ENCODE measurements at regions of chr3 and their contacts with region 1.

Region 1: DNA sequence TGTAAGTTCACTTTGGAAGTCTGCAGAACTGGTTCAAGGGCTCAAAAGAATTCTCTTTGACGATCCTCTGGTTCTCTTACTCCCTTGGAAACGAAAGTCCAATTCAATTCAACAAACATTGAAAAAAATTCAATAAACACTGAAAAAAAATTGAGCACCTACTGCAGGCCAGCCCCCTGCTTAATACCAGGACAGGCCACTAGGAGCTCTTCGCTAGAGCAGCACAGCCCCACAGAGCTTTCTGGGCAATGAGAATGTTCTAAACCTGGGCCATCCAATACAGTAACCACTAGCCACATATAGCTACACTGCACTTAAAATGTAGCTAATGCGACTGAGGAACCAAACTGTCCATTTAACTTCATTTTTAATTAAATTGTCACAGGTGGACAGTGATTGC is 50.4 kb upstream of the DCLK3 start:
- DNase-seq: no peak
- ATAC-seq: peak; percentile 86
- H3K4me3 Mint-ChIP-seq: no peak overlapping the region
- H3K27ac Mint-ChIP-seq: no peak overlapping the region
- H3K4me1 Mint-ChIP-seq: peaks cover 5% of the 10 kb centered on the region; the same call in 1 of the 2 replicates
- H3K27me3 Mint-ChIP-seq: no peaks in the 10 kb centered on the region
- CTCF ChIP-seq: 0 out of 2 replicates have a peak, but pooled peaks have one; percentile 31

Region 2: GRCh38 chr3:36804295-36805055 is 10.3 kb before region 1 on chr3:
- CTCF ChIA-PET with region 1: interaction called, 11 read pairs
- POLR2A ChIA-PET with region 1: no interaction called
- DNase-seq: peak; percentile 34
- ATAC-seq: peak; percentile 72
- H3K4me3 Mint-ChIP-seq: no peak overlapping the region
- H3K27ac Mint-ChIP-seq: no peak overlapping the region
- H3K4me1 Mint-ChIP-seq: peaks cover 18% of the 10 kb centered on the region
- H3K27me3 Mint-ChIP-seq: no peaks in the 10 kb centered on the region
- CTCF ChIP-seq: no peak

Region 3: DNA sequence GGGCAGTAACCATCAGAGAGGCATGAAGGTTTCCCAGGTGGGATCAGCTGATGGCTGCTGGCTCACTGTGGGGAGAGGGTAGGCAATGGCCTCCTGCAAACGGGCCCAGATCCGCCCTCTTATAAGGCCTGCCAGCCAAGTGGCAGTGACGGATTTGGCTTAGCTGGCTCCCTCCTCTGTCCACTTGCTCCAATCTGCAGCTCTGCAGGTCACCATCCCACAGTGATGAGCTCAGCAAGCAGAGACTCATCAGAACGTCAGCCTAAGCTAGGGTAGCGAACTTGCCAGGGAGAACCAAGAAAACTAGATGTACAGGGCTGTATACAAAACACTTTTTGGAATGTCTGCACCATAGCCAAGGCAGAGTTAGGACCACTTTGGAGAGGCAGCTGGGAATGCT is 12.4 kb after region 1 on chr3:
- CTCF ChIA-PET with region 1: interaction called, 14 read pairs
- POLR2A ChIA-PET with region 1: no interaction called
- DNase-seq: no peak
- ATAC-seq: peak; percentile 39
- H3K4me3 Mint-ChIP-seq: no peak overlapping the region
- H3K27ac Mint-ChIP-seq: no peak overlapping the region
- H3K4me1 Mint-ChIP-seq: peaks cover 11% of the 10 kb centered on the region
- H3K27me3 Mint-ChIP-seq: no peaks in the 10 kb centered on the region
- CTCF ChIP-seq: no peak

Region 4: GRCh38 chr3:36837089-36837488 is 22.3 kb after region 1 on chr3:
- CTCF ChIA-PET with region 1: interaction called, 17 read pairs
- POLR2A ChIA-PET with region 1: no interaction called
- DNase-seq: no peak
- ATAC-seq: peak; percentile 90
- H3K4me3 Mint-ChIP-seq: no peak overlapping the region
- H3K27ac Mint-ChIP-seq: no peak overlapping the region
- H3K4me1 Mint-ChIP-seq: no peaks in the 10 kb centered on the region
- H3K27me3 Mint-ChIP-seq: no peaks in the 10 kb centered on the region
- CTCF ChIP-seq: no peak

Region 5: DNA sequence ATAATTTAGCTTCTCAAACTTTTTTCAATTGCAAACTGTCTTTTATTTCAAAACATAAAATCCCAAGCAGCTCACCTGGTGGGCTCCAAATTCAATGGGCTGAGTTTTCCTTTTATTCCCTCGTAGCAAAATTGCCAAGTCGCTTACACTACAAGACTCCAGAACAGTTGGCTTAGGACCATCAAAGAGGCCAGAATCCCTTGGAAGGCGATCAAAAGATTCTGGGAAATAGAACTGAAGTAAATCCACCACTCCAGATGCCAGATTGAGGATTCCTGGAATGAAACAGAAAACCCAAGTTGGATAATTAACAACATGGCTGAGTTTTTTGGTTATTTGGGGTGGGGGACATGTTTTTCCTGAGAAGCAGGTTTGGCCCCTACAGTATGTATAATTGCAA is 37.3 kb after region 1 on chr3:
- CTCF ChIA-PET with region 1: no interaction called
- POLR2A ChIA-PET with region 1: no interaction called
- DNase-seq: no peak
- ATAC-seq: no peak
- H3K4me3 Mint-ChIP-seq: no peak overlapping the region
- H3K27ac Mint-ChIP-seq: no peak overlapping the region
- H3K4me1 Mint-ChIP-seq: no peaks in the 10 kb centered on the region
- H3K27me3 Mint-ChIP-seq: no peaks in the 10 kb centered on the region
- CTCF ChIP-seq: no peak

Region 6: GRCh38 chr3:36868614-36869436 is 54.0 kb after region 1 on chr3:
- CTCF ChIA-PET with region 1: interaction called, 24 read pairs
- POLR2A ChIA-PET with region 1: no interaction called
- DNase-seq: peak; percentile 54
- ATAC-seq: peak; percentile 87
- H3K4me3 Mint-ChIP-seq: no peak overlapping the region
- H3K27ac Mint-ChIP-seq: no peak overlapping the region
- H3K4me1 Mint-ChIP-seq: peaks cover 6% of the 10 kb centered on the region
- H3K27me3 Mint-ChIP-seq: no peaks in the 10 kb centered on the region; the same call in 1 of the 2 replicates
- CTCF ChIP-seq: peak; percentile 72